Endothelial cell of umbilical vein (primary cell): ENCODE measurements at regions of chr1 and their contacts with region 1.

Region 1: GRCh38 chr1:116853670-116854402 is 55.9 kb upstream of the PTGFRN start:
- DNase-seq: peak; percentile 94
- H3K4me3 ChIP-seq: no peak overlapping the region
- H3K27ac ChIP-seq: peak overlapping the region; percentile 72
- H3K4me1 ChIP-seq: peaks cover 30% of the 10 kb centered on the region
- H3K27me3 ChIP-seq: no peaks in the 10 kb centered on the region
- CTCF ChIP-seq: no peak
- POLR2A ChIP-seq: peak; percentile 3

Region 2: GRCh38 chr1:116352349-116352813 is 501.5 kb before region 1 on chr1:
- CTCF ChIA-PET with region 1: no interaction called
- POLR2A ChIA-PET with region 1: no interaction called
- dilution Hi-C with region 1: no loop called
- intact Hi-C with region 1: no loop called
- DNase-seq: no peak
- H3K4me3 ChIP-seq: no peak overlapping the region
- H3K27ac ChIP-seq: no peak overlapping the region
- H3K4me1 ChIP-seq: peaks cover 11% of the 10 kb centered on the region
- H3K27me3 ChIP-seq: no peaks in the 10 kb centered on the region
- CTCF ChIP-seq: no peak
- POLR2A ChIP-seq: no peak

Region 3: DNA sequence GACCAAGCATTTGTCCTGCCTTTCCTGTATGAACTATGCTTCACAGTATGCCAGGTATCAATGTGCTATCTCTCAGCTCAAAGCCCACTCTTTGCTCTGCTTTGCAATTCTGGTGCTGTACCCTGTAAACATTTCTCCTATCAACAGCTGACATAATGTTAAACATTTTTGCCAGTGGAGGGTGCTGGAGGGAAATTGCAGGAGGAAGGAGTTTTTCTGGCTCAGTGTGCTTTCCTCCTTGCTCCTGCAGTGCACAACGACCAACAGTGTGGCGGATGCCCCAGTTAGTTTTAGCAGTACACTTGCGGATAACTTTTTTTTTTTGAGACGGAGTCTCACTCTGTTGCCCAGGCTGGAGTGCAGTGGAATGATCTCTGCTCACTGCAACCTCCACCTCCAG is 11.2 kb before region 1 on chr1:
- CTCF ChIA-PET with region 1: interaction called, 10 read pairs
- POLR2A ChIA-PET with region 1: no interaction called
- dilution Hi-C with region 1: no loop called
- intact Hi-C with region 1: no loop called
- DNase-seq: peak; percentile 20
- H3K4me3 ChIP-seq: no peak overlapping the region
- H3K27ac ChIP-seq: no peak overlapping the region
- H3K4me1 ChIP-seq: peaks cover 2% of the 10 kb centered on the region
- H3K27me3 ChIP-seq: no peaks in the 10 kb centered on the region
- CTCF ChIP-seq: no peak
- POLR2A ChIP-seq: no peak

Region 4: DNA sequence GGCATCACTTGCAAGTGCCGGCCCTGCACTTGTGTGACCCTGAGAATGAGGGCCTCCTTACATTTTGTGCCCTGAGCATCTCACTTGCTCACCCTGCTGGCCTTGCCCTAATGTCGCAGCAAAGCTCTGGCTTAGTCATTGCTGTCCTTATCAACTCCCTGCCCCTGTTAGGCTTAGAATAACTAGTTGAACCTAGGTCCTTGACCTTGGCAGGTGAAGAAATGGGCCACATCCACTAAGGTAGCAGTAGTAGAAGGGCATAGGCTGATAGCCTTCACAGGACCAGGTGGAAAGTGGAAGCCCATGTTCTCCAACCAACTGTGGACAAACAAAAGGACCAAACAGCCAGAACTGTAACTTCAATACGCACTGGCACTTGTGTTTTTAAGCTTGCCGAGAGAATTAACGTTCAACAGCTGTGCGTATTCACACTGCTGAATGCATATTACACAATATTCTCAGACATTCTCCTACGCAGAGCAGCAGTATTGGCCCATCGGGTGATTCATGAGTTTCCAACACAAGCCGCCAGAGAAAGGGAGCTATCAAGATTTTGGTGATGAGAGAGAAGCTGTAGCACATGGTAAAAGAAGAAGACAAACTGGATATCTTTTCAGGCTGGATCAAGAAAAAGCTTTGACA is 28.2 kb after region 1 on chr1:
- CTCF ChIA-PET with region 1: interaction called, 12 read pairs
- POLR2A ChIA-PET with region 1: no interaction called
- dilution Hi-C with region 1: no loop called
- intact Hi-C with region 1: loop called (anchors 1 kb)
- DNase-seq: peak; percentile 26
- H3K4me3 ChIP-seq: no peak overlapping the region
- H3K27ac ChIP-seq: no peak overlapping the region
- H3K4me1 ChIP-seq: peaks cover 26% of the 10 kb centered on the region
- H3K27me3 ChIP-seq: no peaks in the 10 kb centered on the region
- CTCF ChIP-seq: peak; percentile 12 to 27
- POLR2A ChIP-seq: no peak

Region 5: DNA sequence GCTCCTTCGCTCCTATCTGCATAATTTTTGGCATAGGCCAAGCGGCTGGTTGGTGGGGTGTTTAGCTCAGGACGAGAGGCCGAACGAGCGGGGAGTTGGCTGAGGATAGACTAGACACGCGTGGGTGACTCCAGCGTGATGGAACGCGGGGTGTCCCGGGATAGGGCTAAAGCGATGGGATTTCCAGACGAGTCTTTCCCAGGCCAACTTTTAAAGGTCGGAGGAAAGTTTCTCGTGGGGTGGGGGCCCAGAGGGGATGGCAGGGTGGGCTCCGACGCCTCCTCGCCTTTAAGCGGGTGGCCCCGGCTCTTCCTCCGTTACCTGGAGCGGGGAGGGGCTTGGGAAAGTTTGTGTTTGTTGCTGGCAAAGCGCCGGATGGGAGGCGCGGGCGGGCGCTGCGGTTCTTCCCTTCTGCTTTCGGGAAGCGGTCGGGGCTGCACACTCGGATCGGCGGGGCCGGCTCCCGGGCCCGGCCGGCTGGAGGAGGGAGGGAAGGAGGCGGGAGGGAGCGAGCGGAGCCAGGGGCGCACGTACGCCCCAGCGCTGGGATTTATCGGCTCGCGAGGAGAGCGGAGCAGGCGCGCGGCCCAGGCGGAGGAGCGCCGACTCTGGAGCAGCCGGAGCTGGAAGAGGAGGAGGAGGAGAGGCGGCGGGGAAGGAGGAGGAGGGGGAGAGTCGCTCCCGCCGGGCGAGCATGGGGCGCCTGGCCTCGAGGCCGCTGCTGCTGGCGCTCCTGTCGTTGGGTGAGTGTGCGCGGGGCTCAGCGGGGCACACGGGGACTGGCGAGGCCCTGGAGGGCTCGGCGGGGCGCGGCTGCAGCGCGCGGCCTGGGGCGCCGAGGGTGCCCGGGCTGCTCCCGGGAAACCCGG is 55.9 kb after region 1 on chr1 and contains the start of gene PTGFRN:
- CTCF ChIA-PET with region 1: no interaction called
- POLR2A ChIA-PET with region 1: no interaction called
- dilution Hi-C with region 1: no loop called
- intact Hi-C with region 1: loop called (anchors 1 kb)
- DNase-seq: peak; percentile 62
- H3K4me3 ChIP-seq: peak within 1 kb of the TSS; percentile 51 to 62 (median 56)
- H3K27ac ChIP-seq: peak within 1 kb of the TSS; percentile 3
- H3K4me1 ChIP-seq: no peaks in the 10 kb centered on the region
- H3K27me3 ChIP-seq: no peaks in the 10 kb centered on the region
- CTCF ChIP-seq: no peak
- POLR2A ChIP-seq: no peak
- total RNA-seq, gene PTGFRN: 60.7 and 71.6 TPM in 2 replicates

Region 6: DNA sequence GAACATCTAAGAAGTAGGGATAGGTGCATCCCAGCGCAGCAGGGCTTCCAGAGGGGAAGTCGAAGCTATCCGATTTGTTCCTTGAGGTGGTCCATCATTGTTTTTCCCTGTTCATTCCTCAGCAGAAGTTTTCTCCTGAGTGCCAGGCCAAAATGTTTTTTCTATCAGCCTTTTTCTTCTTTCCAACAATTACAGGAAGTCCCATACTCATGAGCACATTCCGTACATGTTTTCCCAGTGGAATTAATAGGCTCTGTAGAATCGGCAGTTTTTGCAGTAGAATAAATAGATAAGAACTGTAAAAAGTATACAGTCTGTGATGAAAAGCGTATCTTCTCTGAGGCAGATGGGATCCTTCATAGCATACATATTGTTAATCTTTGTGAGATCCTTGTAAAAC is 172.5 kb after region 1 on chr1:
- CTCF ChIA-PET with region 1: no interaction called
- POLR2A ChIA-PET with region 1: no interaction called
- dilution Hi-C with region 1: no loop called
- intact Hi-C with region 1: loop called (anchors 1 kb)
- DNase-seq: peak; percentile 83
- H3K4me3 ChIP-seq: peak overlapping the region in 1 of 3 experiments; percentile 5
- H3K27ac ChIP-seq: peak overlapping the region; percentile 87
- H3K4me1 ChIP-seq: peaks cover 27% of the 10 kb centered on the region
- H3K27me3 ChIP-seq: peaks cover 0 to 2% of the 10 kb centered on the region in 2 experiments
- CTCF ChIP-seq: no peak
- POLR2A ChIP-seq: no peak

Region 7: GRCh38 chr1:117562581-117563520 is 709.0 kb after region 1 on chr1:
- CTCF ChIA-PET with region 1: no interaction called
- POLR2A ChIA-PET with region 1: no interaction called
- dilution Hi-C with region 1: no loop called
- intact Hi-C with region 1: no loop called
- DNase-seq: no peak
- H3K4me3 ChIP-seq: no peak overlapping the region
- H3K27ac ChIP-seq: no peak overlapping the region
- H3K4me1 ChIP-seq: no peaks in the 10 kb centered on the region
- H3K27me3 ChIP-seq: no peaks in the 10 kb centered on the region
- CTCF ChIP-seq: no peak
- POLR2A ChIP-seq: no peak